Activated CD4-positive, alpha-beta T cell treated with anti-CD3 and anti-CD28 coated beads, Interleukin-2, amount 10 ng/mL, durations not matched to agents 7 days and 5 days (primary cell): ENCODE measurements at regions of chr7 and their contacts with region 1.

Region 1: GRCh38 chr7:129091484-129092002 is 36.6 kb upstream of the TNPO3 start:
- DNase-seq: peak; percentile 89
- H3K4me3 Mint-ChIP-seq: no peak overlapping the region
- H3K27ac Mint-ChIP-seq: no peak overlapping the region
- H3K4me1 Mint-ChIP-seq: peaks cover 39% of the 10 kb centered on the region
- H3K27me3 Mint-ChIP-seq: no peaks in the 10 kb centered on the region

Region 2: DNA sequence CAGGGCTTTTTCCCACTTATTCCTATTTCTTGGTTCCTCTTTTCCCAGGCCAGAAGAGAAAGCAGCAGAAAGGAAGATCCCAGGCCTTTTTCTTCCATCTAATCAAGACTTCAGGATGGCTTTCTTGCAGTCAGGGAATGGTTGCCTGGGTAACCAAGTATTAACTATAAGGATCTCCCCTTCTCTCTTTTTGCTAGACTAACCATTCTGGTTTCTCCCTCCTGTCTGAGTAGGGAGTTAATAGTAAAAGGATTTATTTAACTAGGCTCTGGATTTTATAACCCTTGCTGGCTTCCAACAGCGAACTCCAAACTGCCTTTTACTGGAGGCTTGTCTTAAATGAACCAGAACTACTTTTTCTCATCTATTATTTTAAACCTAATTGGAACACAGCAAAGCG is 1929.2 kb before region 1 on chr7:
- CTCF ChIA-PET with region 1: no interaction called
- POLR2A ChIA-PET with region 1: no interaction called
- DNase-seq: no peak
- H3K4me3 Mint-ChIP-seq: no peak overlapping the region
- H3K27ac Mint-ChIP-seq: no peak overlapping the region
- H3K4me1 Mint-ChIP-seq: no peaks in the 10 kb centered on the region
- H3K27me3 Mint-ChIP-seq: peaks cover 5% of the 10 kb centered on the region

Region 3: GRCh38 chr7:128041203-128041602 is 1050.3 kb before region 1 on chr7:
- CTCF ChIA-PET with region 1: no interaction called
- POLR2A ChIA-PET with region 1: no interaction called
- DNase-seq: no peak
- H3K4me3 Mint-ChIP-seq: no peak overlapping the region
- H3K27ac Mint-ChIP-seq: no peak overlapping the region
- H3K4me1 Mint-ChIP-seq: peaks cover 19% of the 10 kb centered on the region
- H3K27me3 Mint-ChIP-seq: no peaks in the 10 kb centered on the region

Region 4: DNA sequence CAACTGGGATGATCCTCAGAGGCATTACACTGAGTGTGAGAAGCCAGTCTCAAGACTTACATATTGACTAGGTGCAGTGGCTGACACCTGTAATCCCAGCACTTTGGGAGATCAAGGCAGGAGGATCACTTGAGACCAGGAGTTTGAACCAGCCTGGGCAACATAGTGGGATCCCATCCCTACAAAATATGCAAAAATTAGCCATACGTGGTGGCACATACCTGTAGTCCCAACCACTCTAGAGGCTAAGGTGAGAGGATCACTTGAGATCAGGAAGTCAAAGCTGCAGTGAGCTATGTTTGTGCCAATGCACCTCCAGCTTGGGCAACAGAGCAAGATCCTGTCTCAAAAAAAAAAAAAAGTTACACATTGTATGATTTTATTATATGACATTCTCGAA is 13.1 kb before region 1 on chr7:
- CTCF ChIA-PET with region 1: interaction called, 16 read pairs
- POLR2A ChIA-PET with region 1: no interaction called
- DNase-seq: no peak
- H3K4me3 Mint-ChIP-seq: no peak overlapping the region
- H3K27ac Mint-ChIP-seq: no peak overlapping the region
- H3K4me1 Mint-ChIP-seq: no peaks in the 10 kb centered on the region
- H3K27me3 Mint-ChIP-seq: peaks cover 7% of the 10 kb centered on the region

Region 5: GRCh38 chr7:129101746-129102145 is 10.2 kb after region 1 on chr7:
- CTCF ChIA-PET with region 1: interaction called, 14 read pairs
- POLR2A ChIA-PET with region 1: no interaction called
- DNase-seq: no peak
- H3K4me3 Mint-ChIP-seq: no peak overlapping the region
- H3K27ac Mint-ChIP-seq: no peak overlapping the region
- H3K4me1 Mint-ChIP-seq: no peaks in the 10 kb centered on the region
- H3K27me3 Mint-ChIP-seq: no peaks in the 10 kb centered on the region